Activated CD4-positive, alpha-beta T cell treated with anti-CD3 and anti-CD28 coated beads for 36 hours (primary cell): ENCODE measurements at regions of chr5 and their contacts with region 1.

Region 1: DNA sequence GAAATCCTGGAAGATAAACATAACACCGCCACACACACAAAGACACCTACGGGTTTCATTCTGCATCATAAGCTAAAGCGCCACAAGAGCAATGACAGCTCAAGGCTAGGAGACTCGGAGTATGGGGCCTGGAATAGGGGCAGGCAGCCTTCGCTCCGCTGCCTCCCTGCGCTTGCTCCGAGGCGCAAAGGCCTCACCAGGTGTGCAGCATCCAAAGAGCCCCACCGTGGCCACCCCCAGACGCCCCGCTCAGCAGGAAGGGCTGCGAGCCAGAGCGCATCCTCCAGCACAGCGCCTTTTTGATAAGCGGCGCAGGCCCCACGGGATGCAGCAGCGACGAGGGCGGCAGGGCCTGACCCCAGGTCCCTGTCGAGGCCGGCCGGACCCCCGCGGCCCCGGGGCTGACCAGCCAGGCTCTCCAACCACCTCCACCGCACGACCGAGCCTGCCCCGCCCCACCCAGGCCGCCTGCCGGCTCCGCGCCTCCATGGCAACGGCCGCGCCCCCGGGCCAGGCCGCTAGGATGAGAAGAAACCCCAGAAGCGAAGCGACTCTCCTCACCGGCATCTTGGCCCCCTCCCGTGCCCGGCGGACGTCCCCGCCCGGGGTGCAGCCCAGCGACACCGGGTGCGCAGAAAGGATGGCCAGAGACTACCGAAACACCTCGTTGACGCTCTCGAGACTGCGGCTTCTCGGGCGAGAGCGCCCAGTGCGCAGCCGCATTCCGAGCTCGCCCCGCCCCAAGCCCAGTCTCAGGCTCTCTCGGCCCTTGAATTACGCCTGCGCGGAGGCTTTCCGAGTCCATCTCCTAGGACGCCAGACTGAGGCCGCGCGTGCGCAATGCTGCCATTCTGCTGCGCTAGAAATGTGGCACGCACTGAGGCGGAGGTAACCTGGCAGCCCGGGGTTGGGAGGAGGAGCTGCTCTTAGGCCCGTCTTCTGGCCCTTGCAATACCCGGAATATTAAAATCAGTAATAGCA is at the start of gene KIF3A:
- DNase-seq: peak; percentile 99
- ATAC-seq: peak; percentile 94
- H3K4me3 Mint-ChIP-seq: peak within 1 kb of the TSS; percentile 77
- H3K27ac Mint-ChIP-seq: peak within 1 kb of the TSS; percentile 70
- H3K4me1 Mint-ChIP-seq: peaks cover 30% of the 10 kb centered on the region
- H3K27me3 Mint-ChIP-seq: no peaks in the 10 kb centered on the region
- total RNA-seq, gene KIF3A: 7.1 to 10.6 TPM

Region 2: GRCh38 chr5:132526290-132526973 is 210.7 kb before region 1 on chr5:
- CTCF ChIA-PET with region 1: no interaction called
- POLR2A ChIA-PET with region 1: interaction called, 4 read pairs
- intact Hi-C with region 1: loop called in 1 of 2 experiments (anchors 5 kb)
- DNase-seq: peak; percentile 60
- ATAC-seq: peak; percentile 34
- H3K4me3 Mint-ChIP-seq: no peak overlapping the region
- H3K27ac Mint-ChIP-seq: no peak overlapping the region
- H3K4me1 Mint-ChIP-seq: peaks cover 39% of the 10 kb centered on the region
- H3K27me3 Mint-ChIP-seq: peaks cover 3% of the 10 kb centered on the region

Region 3: GRCh38 chr5:132753135-132753987 is 16.2 kb after region 1 on chr5:
- CTCF ChIA-PET with region 1: interaction called, 5 read pairs
- POLR2A ChIA-PET with region 1: interaction called, 4 read pairs
- intact Hi-C with region 1: loop called (anchors 1 to 2 kb)
- DNase-seq: peak; percentile 49
- ATAC-seq: peak; percentile 47
- H3K4me3 Mint-ChIP-seq: no peak overlapping the region
- H3K27ac Mint-ChIP-seq: peak overlapping the region; percentile 7
- H3K4me1 Mint-ChIP-seq: peaks cover 28% of the 10 kb centered on the region
- H3K27me3 Mint-ChIP-seq: no peaks in the 10 kb centered on the region

Region 4: DNA sequence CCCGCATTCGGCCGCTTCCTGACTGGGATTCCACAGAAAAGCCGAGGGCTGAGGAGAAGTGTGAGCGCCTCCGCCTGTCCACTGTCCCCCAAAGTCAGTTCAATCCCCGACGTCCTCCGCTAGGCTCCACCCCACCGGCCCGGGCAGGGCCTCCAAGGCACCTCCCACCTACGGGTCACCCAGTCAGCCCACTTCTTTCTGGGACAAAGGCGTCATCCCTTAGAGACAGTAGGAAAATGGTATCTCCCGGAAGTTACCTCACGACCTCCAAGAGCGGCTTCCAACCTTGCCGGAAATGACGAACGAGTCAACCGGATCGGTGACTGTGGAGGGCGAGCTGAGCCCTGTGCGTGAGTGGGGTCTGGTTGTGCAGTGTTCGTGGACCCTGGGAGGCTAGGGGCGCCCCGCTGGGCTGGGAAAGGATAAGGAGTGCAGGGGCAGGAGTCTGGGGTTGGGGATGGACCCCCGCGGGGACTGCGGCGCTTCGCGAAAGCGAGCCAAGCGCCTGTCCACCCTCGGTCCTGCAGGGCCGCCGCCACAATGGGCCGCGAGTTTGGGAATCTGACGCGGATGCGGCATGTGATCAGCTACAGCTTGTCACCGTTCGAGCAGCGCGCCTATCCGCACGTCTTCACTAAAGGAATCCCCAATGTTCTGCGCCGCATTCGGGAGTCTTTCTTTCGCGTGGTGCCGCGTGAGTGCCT is 129.4 kb after region 1 on chr5 and contains the starts of genes GDF9 and UQCRQ:
- CTCF ChIA-PET with region 1: interaction called, 3 read pairs
- POLR2A ChIA-PET with region 1: no interaction called
- intact Hi-C with region 1: loop called in 1 of 2 experiments (anchors 1 kb)
- DNase-seq: peak; percentile 94
- ATAC-seq: peak; percentile 99
- H3K4me3 Mint-ChIP-seq: peak within 1 kb of the TSS; percentile 99
- H3K27ac Mint-ChIP-seq: peak within 1 kb of the TSS; percentile 100
- H3K4me1 Mint-ChIP-seq: peaks cover 26% of the 10 kb centered on the region
- H3K27me3 Mint-ChIP-seq: no peaks in the 10 kb centered on the region
- total RNA-seq, gene GDF9: 0.41 to 0.69 TPM
- total RNA-seq, gene UQCRQ: 299 to 537 TPM

Region 5: DNA sequence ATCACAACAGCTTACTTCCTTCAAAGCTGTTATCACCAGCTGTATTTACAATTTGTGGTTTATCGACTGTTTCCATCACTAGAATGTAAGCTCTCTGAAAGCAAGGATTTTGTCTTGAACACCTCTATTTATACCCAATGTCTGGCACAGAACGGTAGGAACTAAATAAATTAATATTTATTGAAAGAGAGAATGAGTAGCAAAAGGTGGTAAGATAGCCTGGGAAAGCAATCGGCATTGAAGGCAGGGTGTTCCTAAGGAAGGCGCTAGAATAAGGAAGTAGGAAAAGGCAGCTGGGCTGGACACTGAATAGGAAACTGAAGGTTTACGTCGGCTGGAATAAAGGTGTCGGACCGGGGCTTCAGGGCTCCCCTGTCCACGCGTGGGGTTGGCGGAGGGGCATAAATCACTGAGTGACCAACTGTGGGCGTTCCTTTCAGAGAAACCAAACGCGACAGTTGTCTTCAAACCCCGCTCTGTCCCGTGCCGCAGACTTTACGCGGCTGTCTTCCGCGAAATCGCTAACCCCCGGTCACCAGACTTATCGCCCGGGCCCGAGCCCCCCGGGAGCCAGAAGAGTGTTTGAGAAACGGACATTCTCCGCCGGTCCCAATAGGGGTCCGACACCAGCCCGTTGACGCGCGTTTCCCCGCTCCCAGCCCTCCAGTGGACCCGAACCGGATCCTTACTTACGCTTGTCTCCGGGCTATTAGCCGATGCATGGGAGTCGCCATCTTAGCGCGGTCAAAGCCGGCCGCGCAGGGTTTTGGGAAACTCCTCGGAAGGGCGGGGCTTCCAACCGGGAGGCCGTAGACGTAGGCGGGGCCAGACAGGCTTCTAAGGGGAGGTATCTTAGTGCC is 288.9 kb after region 1 on chr5 and contains the start of gene ZCCHC10:
- CTCF ChIA-PET with region 1: no interaction called
- POLR2A ChIA-PET with region 1: no interaction called
- intact Hi-C with region 1: loop called in 1 of 2 experiments (anchors 1 kb)
- DNase-seq: peak; percentile 96
- ATAC-seq: peak; percentile 100
- H3K4me3 Mint-ChIP-seq: peak within 1 kb of the TSS; percentile 94
- H3K27ac Mint-ChIP-seq: peak within 1 kb of the TSS; percentile 91
- H3K4me1 Mint-ChIP-seq: peaks cover 17% of the 10 kb centered on the region
- H3K27me3 Mint-ChIP-seq: no peaks in the 10 kb centered on the region
- total RNA-seq, gene ZCCHC10: 25.7 to 32.2 TPM